Activated CD4-positive, alpha-beta memory T cell treated with anti-CD3 and anti-CD28 coated beads, Interleukin-2, amount 10 ng/mL, durations not matched to agents 7 days and 5 days (primary cell): ENCODE measurements at regions of chr12 and their contacts with region 1.

Region 1: DNA sequence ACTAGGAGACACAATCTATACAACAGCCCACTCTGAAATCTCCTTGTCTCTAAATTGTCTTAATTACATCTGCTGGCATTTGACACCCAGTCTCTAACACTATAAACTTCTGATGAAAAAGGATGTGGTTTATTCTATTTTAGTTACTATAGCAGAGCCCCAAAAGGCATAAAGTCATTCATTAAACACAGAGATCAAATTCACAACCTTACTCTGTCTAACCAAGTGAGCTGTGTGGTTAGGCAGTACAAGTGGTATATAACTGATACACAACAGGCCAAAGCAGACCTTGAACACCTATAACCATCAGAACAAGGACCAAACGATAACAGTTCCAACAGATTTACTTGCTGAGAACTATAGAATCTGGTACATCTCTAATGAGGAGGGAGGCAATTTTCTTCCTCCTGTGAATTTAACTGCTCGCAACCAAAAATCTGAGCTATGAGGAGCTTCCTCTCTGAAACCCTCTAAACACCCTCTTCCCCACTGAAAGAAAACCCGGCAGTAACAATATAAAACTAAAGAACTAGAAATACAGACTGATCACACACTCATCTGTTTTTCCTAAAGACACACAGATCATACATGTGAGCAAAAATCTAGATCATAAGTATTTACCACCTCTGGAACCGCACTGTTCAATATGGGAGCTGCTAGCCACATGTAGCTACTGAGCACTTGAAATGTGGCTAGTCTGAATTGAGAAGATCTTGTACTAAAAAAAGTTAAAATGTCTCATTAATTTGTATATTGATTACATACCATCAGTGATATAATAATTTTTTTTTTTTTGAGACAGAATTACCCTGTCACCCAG is 17.7 kb downstream of the SPPL3 start:
- DNase-seq: no peak
- H3K4me3 Mint-ChIP-seq: peak overlapping the region; percentile 4
- H3K27ac Mint-ChIP-seq: peak overlapping the region; percentile 73
- H3K4me1 Mint-ChIP-seq: peaks cover 27% of the 10 kb centered on the region
- H3K27me3 Mint-ChIP-seq: no peaks in the 10 kb centered on the region

Region 2: GRCh38 chr12:120290541-120291309 is 595.7 kb before region 1 on chr12:
- CTCF ChIA-PET with region 1: no interaction called
- POLR2A ChIA-PET with region 1: no interaction called
- DNase-seq: peak; percentile 54
- H3K4me3 Mint-ChIP-seq: no peak overlapping the region
- H3K27ac Mint-ChIP-seq: peak overlapping the region; percentile 60
- H3K4me1 Mint-ChIP-seq: peaks cover 13% of the 10 kb centered on the region
- H3K27me3 Mint-ChIP-seq: peaks cover 18% of the 10 kb centered on the region

Region 3: GRCh38 chr12:120904197-120904773 is 17.9 kb after region 1 on chr12 and contains the start of gene SPPL3:
- CTCF ChIA-PET with region 1: interaction called, 6 read pairs
- POLR2A ChIA-PET with region 1: interaction called, 28 read pairs
- DNase-seq: peak; percentile 93
- H3K4me3 Mint-ChIP-seq: peak within 1 kb of the TSS; percentile 100
- H3K27ac Mint-ChIP-seq: peak within 1 kb of the TSS; percentile 90
- H3K4me1 Mint-ChIP-seq: peaks cover 29% of the 10 kb centered on the region
- H3K27me3 Mint-ChIP-seq: no peaks in the 10 kb centered on the region
- total RNA-seq, gene SPPL3: 32.0 to 32.1 TPM